CD8-positive, alpha-beta T cell (primary cell): ENCODE measurements at regions of chr18 and their contacts with region 1.

Region 1: GRCh38 chr18:45715341-45715740 is 8.6 kb upstream of the SLC14A1 start:
- DNase-seq: no peak
- ATAC-seq: no peak
- H3K4me3 ChIP-seq: no peak overlapping the region
- H3K4me3 Mint-ChIP-seq: no peak overlapping the region
- H3K27ac ChIP-seq: no peak overlapping the region
- H3K27ac Mint-ChIP-seq: no peak overlapping the region
- H3K4me1 ChIP-seq: no peaks in the 10 kb centered on the region
- H3K4me1 Mint-ChIP-seq: no peaks in the 10 kb centered on the region
- H3K27me3 ChIP-seq: no peaks in the 10 kb centered on the region
- H3K27me3 Mint-ChIP-seq: peaks cover 2% of the 10 kb centered on the region
- CTCF ChIP-seq: no peak

Region 2: DNA sequence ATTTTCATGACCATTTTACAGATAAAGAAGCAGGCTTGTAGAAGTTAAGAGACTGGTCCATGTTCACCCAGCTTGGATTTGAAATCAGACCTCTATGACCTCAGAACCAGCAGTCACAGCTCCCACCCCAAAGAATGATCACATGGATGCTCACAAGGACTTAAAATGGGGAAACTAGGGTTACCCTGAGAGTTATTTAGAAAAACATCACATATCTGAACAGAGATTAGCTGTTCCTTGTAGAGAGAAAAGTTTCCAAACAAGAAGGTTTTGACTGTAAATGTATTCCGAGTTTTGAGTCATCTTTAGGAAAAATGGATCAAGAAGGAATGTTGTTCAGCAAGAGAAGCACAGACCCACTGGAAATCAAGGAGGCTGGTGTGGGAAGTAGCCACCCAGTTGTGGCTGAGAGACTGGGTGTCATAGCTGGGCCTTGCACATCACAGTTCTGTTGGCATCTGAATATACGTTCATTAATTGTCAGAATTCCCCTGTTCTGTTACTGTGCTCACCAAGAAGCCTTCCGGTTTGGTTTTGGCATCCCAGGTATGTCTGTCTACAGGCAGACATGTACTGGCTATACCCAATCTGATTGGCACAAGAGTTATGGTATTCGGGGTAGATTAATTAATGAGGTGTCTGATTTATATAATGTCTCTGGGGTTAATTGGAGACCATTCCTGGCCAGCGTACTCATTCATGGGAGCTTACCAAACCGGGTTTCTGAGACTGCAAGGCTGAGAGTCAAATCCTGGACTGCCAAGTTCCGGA is 471.8 kb before region 1 on chr18:
- CTCF ChIA-PET with region 1: no interaction called
- POLR2A ChIA-PET with region 1: no interaction called
- intact Hi-C with region 1: no loop called
- DNase-seq: no peak
- ATAC-seq: no peak
- H3K4me3 ChIP-seq: no peak overlapping the region
- H3K4me3 Mint-ChIP-seq: no peak overlapping the region
- H3K27ac ChIP-seq: no peak overlapping the region
- H3K27ac Mint-ChIP-seq: no peak overlapping the region
- H3K4me1 ChIP-seq: no peaks in the 10 kb centered on the region
- H3K4me1 Mint-ChIP-seq: no peaks in the 10 kb centered on the region
- H3K27me3 ChIP-seq: no peaks in the 10 kb centered on the region
- H3K27me3 Mint-ChIP-seq: peaks cover 4% of the 10 kb centered on the region
- CTCF ChIP-seq: no peak

Region 3: DNA sequence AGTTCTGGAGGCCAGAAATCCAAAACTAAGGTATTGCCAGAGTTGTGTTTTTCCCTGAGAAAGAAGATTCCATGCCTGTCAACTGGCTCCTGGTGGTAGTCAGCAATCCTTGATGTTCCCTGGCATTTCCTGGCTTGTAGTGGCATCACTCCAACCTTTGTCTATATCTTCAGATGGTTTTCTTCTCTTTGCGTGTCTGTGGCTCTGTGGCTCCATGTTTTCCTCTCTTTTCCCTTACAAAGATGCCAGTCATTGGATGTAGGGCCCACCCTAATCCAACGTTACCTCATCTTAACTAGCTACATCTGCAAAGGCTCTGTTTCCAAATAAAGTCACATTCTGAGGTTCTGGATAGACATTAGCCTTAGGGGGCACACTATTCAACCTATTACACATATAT is 50.5 kb after region 1 on chr18:
- CTCF ChIA-PET with region 1: no interaction called
- POLR2A ChIA-PET with region 1: no interaction called
- intact Hi-C with region 1: loop called in 1 of 2 experiments (anchors 5 kb)
- DNase-seq: no peak
- ATAC-seq: no peak
- H3K4me3 ChIP-seq: no peak overlapping the region
- H3K4me3 Mint-ChIP-seq: no peak overlapping the region
- H3K27ac ChIP-seq: no peak overlapping the region
- H3K27ac Mint-ChIP-seq: no peak overlapping the region
- H3K4me1 ChIP-seq: no peaks in the 10 kb centered on the region
- H3K4me1 Mint-ChIP-seq: peaks cover 4% of the 10 kb centered on the region
- H3K27me3 ChIP-seq: no peaks in the 10 kb centered on the region
- H3K27me3 Mint-ChIP-seq: peaks cover 15% of the 10 kb centered on the region
- CTCF ChIP-seq: no peak

Region 4: DNA sequence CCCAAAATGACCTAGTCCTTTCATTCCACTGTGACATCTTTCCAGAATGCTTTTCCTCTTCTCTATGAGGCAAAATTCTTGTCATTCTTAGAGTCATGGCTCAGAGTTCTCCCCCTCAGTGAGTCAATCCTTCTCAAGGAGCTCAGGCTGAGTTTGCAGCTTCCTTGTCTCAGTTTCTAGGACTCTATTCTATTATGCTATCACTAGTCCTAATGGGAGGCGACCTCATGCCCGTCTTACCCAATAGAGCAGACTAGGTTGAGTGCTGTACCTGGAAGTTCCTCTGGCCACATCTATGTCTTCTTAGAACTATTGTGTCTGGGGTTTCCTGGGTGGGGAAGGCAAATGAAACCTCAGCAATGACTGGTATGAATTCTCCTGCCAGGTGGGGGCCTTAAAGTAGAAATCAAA is 440.3 kb after region 1 on chr18:
- CTCF ChIA-PET with region 1: no interaction called
- POLR2A ChIA-PET with region 1: no interaction called
- intact Hi-C with region 1: no loop called
- DNase-seq: peak in 8 of 9 experiments; percentile 10 to 70 (median 36)
- ATAC-seq: peak; percentile 89
- H3K4me3 ChIP-seq: peak overlapping the region in 1 of 2 experiments; percentile 2
- H3K4me3 Mint-ChIP-seq: peak overlapping the region; percentile 74
- H3K27ac ChIP-seq: peak overlapping the region; percentile 45 to 77
- H3K27ac Mint-ChIP-seq: peak overlapping the region; percentile 96
- H3K4me1 ChIP-seq: peaks cover 77% of the 10 kb centered on the region
- H3K4me1 Mint-ChIP-seq: peaks cover 73% of the 10 kb centered on the region
- H3K27me3 ChIP-seq: no peaks in the 10 kb centered on the region
- H3K27me3 Mint-ChIP-seq: no peaks in the 10 kb centered on the region
- CTCF ChIP-seq: no peak